ENCODE measurements at regions of chr2 and their contacts with region 1.

Region 1: GRCh38 chr2:8544786-8545694 is 136.8 kb upstream of the ID2 start:
- DNase-seq: peak; percentile 84
- H3K4me3 Mint-ChIP-seq: no peak overlapping the region
- H3K27ac Mint-ChIP-seq: peak overlapping the region; percentile 99
- H3K4me1 Mint-ChIP-seq: peaks cover 80% of the 10 kb centered on the region
- H3K27me3 Mint-ChIP-seq: no peaks in the 10 kb centered on the region

Region 2: DNA sequence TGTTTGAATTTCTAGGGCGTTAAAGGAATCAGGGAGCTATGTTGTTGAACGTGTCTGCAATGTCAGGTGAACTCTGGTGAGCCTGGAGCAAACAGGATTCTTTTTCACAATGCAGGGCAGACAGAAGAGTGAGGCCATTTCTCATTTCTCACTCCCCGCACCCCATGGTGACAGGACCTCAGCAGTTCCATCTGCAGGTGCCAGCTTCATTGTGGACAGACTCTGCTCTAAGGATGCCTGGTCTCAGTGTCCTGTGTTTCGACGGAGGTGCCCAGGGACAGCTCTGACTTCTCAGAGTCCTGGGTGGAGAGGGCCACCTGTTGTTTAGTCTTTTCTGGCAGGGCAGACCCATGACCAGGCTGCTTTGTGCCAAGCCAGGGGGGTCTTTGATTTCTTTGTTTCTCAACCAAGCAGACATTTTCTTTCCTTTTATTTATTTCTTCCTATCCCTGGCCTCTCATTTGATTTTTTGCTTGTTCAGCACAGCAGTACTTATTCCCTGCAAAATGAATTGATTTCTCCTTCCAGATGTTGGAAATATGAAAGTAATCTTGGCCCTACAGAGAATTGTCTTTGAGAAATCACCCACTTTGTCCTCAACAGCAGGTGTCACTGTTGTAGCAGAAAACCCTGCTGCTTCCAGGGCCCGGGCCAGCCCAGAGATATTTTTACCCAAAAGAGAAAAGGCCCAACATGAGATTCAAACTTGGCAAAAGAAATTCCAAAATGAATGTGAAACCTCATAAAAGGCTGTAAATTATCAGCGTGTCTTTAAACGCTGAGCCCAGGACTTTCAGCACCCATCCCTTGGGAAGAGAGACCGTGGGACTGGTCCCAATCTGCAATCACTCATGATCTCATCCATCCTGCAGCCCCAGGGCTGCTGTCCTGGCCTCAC is 1426.2 kb before region 1 on chr2:
- intact Hi-C with region 1: no loop called
- DNase-seq: no peak
- H3K4me3 Mint-ChIP-seq: no peak overlapping the region
- H3K27ac Mint-ChIP-seq: no peak overlapping the region
- H3K4me1 Mint-ChIP-seq: no peaks in the 10 kb centered on the region
- H3K27me3 Mint-ChIP-seq: peaks cover 2% of the 10 kb centered on the region

Region 3: GRCh38 chr2:7672027-7672684 is 872.9 kb before region 1 on chr2:
- intact Hi-C with region 1: loop called (anchors 10 kb)
- DNase-seq: peak; percentile 51
- H3K4me3 Mint-ChIP-seq: peak overlapping the region; percentile 63
- H3K27ac Mint-ChIP-seq: peak overlapping the region; percentile 97
- H3K4me1 Mint-ChIP-seq: peaks cover 60% of the 10 kb centered on the region
- H3K27me3 Mint-ChIP-seq: no peaks in the 10 kb centered on the region

Region 4: GRCh38 chr2:7930800-7931635 is 614.0 kb before region 1 on chr2:
- intact Hi-C with region 1: loop called (anchors 1 kb)
- DNase-seq: no peak
- H3K4me3 Mint-ChIP-seq: peak overlapping the region; percentile 17
- H3K27ac Mint-ChIP-seq: peak overlapping the region; percentile 85
- H3K4me1 Mint-ChIP-seq: peaks cover 36% of the 10 kb centered on the region
- H3K27me3 Mint-ChIP-seq: no peaks in the 10 kb centered on the region

Region 5: GRCh38 chr2:8234757-8235374 is 310.2 kb before region 1 on chr2:
- intact Hi-C with region 1: loop called (anchors 1 kb)
- DNase-seq: no peak
- H3K4me3 Mint-ChIP-seq: no peak overlapping the region
- H3K27ac Mint-ChIP-seq: no peak overlapping the region
- H3K4me1 Mint-ChIP-seq: peaks cover 34% of the 10 kb centered on the region
- H3K27me3 Mint-ChIP-seq: peaks cover 4% of the 10 kb centered on the region

Region 6: GRCh38 chr2:8477552-8478470 is 67.2 kb before region 1 on chr2:
- intact Hi-C with region 1: loop called (anchors 1 kb)
- DNase-seq: no peak
- H3K4me3 Mint-ChIP-seq: peak overlapping the region; percentile 5
- H3K27ac Mint-ChIP-seq: peak overlapping the region; percentile 72
- H3K4me1 Mint-ChIP-seq: peaks cover 79% of the 10 kb centered on the region
- H3K27me3 Mint-ChIP-seq: no peaks in the 10 kb centered on the region

Region 7: DNA sequence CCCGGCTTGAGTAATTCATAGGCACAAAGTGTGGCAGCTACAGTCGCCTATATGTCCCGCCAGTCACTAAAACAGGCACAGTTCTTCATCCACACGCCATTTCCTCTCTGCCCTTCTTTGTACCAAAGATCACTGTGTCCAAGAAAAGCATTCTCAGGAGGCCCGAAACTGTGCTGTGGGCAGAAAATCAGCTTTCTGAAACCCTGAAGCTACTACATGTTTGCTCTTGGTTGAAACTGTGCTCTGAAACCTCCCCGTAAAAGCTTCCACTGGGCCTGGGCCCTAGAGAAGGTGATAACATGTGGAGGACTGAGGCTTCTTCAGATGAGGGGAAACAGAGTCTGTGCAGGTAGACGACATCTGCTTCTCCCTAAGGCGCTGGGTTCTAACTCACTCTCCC is 61.2 kb after region 1 on chr2:
- intact Hi-C with region 1: loop called (anchors 1 kb)
- DNase-seq: no peak
- H3K4me3 Mint-ChIP-seq: no peak overlapping the region
- H3K27ac Mint-ChIP-seq: peak overlapping the region; percentile 53
- H3K4me1 Mint-ChIP-seq: peaks cover 55% of the 10 kb centered on the region
- H3K27me3 Mint-ChIP-seq: peaks cover 7% of the 10 kb centered on the region

Region 8: DNA sequence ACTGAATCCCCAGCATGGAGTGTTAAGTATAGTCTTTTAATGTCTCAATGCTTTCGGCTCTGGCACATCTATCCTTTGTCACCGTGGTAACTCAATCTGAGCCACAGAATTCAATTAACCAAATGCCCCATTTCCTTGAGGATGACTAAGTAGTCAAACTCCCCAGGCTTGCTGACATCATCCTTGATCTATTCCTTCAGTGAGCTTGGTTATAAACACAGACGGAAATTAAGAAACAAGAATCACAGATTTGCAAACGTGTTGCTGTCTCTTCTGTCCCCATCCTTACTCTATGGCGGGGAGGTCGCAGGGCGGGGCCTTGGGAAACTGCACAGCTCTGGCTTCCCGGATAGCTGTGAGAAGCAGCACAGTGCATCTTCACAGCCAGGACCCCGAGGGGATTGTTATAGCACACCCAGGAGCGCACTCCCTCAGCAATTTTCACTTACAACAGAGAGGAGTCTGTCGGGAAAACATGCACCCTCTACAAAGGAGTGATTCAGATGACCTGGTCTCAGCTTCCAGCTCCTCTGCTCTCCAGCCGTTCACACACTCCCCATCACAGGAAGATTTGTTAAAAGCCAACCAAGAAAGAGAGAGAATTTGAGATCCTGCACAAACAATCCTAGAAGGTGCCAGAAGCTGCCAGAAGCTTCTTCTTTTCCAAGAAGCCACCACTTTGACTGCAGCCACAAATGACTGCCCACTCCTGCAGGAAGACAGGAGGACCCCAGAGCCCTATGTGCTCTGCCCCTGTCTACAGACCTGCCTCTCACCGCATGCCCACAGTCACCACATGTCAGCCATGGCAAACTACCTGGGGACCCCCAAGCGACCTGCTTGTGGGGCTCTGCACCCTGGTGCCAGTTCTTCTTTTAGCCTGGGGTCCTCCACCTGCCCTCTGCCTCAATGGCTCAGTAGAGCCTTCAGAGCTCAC is 1130.6 kb after region 1 on chr2:
- intact Hi-C with region 1: no loop called
- DNase-seq: no peak
- H3K4me3 Mint-ChIP-seq: no peak overlapping the region
- H3K27ac Mint-ChIP-seq: no peak overlapping the region
- H3K4me1 Mint-ChIP-seq: peaks cover 7% of the 10 kb centered on the region
- H3K27me3 Mint-ChIP-seq: no peaks in the 10 kb centered on the region